ENCODE measurements at regions of chr20 and their contacts with region 1.

Region 1: GRCh38 chr20:60057123-60057801 is 99.0 kb downstream of the CDH26 start:
- DNase-seq: peak in 9 of 10 donors; percentile 46 to 77 (median 66)
- H3K4me3 ChIP-seq: peak overlapping the region in 24 of 59 donors; percentile 1 to 46 (median 26)
- H3K27ac ChIP-seq: peak overlapping the region in 8 of 59 donors; percentile 20 to 56 (median 34)
- H3K27me3 ChIP-seq: peaks cover 0 to 8% (median 0%) of the 10 kb centered on the region in 45 donors
- CTCF ChIP-seq: peak; percentile 70 to 94 (median 87)

Region 2: DNA sequence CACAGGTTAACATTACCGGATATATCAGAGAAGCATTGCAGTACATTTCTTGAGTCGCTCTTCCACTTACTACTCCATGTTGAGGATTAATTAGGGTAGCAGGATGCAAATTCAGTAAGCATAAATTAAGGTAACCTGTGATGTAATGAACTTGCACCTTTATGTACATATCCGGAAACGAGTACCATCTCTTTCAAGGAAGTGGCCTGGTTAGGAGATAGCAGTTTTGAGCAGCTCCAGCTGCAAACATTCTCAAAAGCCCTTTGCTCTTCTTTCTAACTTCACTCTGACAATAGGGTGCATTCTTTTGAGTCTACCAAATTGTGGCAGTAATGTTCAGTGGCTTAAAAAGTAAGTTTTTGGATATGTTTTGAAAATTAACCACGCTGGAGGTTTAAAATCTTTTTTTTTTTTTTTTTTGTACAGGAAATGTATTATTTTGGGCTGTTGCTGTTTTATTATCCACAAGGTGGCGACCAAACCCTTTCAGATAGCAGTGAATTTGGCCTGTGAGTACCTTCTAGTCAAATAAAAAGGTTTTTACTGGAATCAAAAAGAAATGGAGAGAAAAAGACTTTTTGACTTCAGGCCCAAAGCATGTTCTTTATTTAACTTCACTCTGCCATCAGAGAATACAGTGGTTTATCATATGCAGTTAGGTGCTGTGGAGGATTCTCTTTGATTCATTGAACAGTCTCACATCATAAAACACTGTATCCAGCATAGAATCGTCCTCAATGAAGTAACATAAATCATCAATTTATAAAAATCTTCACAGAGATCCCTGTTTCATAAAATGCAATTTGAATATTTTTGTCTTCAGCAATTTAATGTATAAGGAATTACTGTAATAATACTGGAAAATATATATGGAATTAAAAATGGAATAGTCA is 108.2 kb before region 1 on chr20:
- intact Hi-C with region 1: loop called (anchors 5 to 10 kb)
- DNase-seq: no peak
- H3K4me3 ChIP-seq: peak overlapping the region in 2 of 59 donors; percentile 6 to 8
- H3K27ac ChIP-seq: peak overlapping the region in 56 of 59 donors; percentile 2 to 82 (median 60)
- H3K27me3 ChIP-seq: no peaks in the 10 kb centered on the region
- CTCF ChIP-seq: peak; percentile 42 to 88 (median 75)

Region 3: GRCh38 chr20:59955132-59955796 is 102.0 kb before region 1 on chr20:
- intact Hi-C with region 1: loop called in 1 of 2 experiments (anchors 10 kb)
- DNase-seq: no peak
- H3K4me3 ChIP-seq: no peak overlapping the region
- H3K27ac ChIP-seq: peak overlapping the region in 31 of 59 donors; percentile 2 to 68 (median 41)
- H3K27me3 ChIP-seq: no peaks in the 10 kb centered on the region
- CTCF ChIP-seq: peak in 55 of 56 donors; percentile 11 to 76 (median 55)

Region 4: GRCh38 chr20:60352066-60352465 is 294.8 kb after region 1 on chr20:
- intact Hi-C with region 1: loop called in 1 of 2 experiments (anchors 10 kb)
- DNase-seq: no peak
- H3K4me3 ChIP-seq: no peak overlapping the region
- H3K27ac ChIP-seq: no peak overlapping the region
- H3K27me3 ChIP-seq: no peaks in the 10 kb centered on the region
- CTCF ChIP-seq: no peak

Region 5: DNA sequence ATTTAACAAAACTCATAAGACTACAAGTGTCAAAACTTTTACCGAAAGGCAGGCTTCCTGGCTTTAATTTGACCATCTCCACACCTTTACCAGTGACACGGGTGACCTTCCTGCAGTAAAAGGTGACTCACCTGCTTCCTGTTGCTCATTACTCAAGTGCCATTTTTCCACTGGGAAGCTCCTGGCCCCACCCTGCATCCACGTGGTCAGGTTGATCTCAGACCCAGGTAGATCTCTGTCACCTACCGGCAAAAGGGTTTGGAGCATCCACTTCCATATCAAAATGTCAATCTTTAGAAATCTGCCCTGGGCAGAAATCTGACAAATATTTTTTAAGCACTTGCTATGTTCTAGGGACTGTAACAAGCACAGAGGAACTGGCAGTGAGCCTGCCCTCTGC is 1162.9 kb after region 1 on chr20:
- intact Hi-C with region 1: loop called in 1 of 2 experiments (anchors 10 kb)
- DNase-seq: no peak
- H3K4me3 ChIP-seq: no peak overlapping the region
- H3K27ac ChIP-seq: no peak overlapping the region
- H3K27me3 ChIP-seq: peaks cover 0 to 29% (median 4%) of the 10 kb centered on the region in 45 donors
- CTCF ChIP-seq: no peak

Region 6: DNA sequence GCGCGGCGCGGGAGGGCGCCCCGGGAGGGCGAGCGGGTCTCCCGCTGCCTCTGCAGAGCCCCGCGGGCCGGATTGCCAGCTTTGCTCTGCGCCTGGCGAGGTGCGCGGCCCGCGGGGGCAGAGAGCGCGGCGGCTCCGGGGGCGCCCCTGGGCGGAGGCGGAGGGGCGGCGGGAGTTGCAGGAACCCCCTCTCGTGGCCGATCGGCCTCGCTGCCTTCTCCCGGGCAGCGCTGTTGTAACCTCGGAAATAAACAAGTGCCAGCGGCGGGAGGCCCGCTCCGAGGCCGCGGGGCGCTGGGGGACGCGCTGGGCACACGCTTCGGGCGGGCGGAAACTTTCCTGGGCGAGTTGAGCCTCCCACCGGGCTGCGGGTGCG is 1196.0 kb after region 1 on chr20:
- intact Hi-C with region 1: loop called in 1 of 2 experiments (anchors 10 kb)
- DNase-seq: peak in 3 of 10 donors; percentile 27 to 54 (median 30)
- H3K4me3 ChIP-seq: peak overlapping the region; percentile 34 to 74 (median 59)
- H3K27ac ChIP-seq: peak overlapping the region in 36 of 59 donors; percentile 6 to 79 (median 52)
- H3K27me3 ChIP-seq: peaks cover 0 to 33% (median 3%) of the 10 kb centered on the region in 45 donors
- CTCF ChIP-seq: peak in 18 of 56 donors; percentile 3 to 42 (median 14)

Region 7: GRCh38 chr20:61896058-61896961 is 1839.0 kb after region 1 on chr20:
- intact Hi-C with region 1: loop called in 1 of 2 experiments (anchors 10 kb)
- DNase-seq: peak in 8 of 10 donors; percentile 25 to 76 (median 51)
- H3K4me3 ChIP-seq: no peak overlapping the region
- H3K27ac ChIP-seq: peak overlapping the region in 3 of 59 donors; percentile 16 to 38 (median 21)
- H3K27me3 ChIP-seq: peaks cover 0 to 7% (median 0%) of the 10 kb centered on the region in 45 donors
- CTCF ChIP-seq: peak; percentile 25 to 92 (median 83)

Measured in dorsolateral prefrontal cortex (tissue), 120 donors.